ENCODE measurements at regions of chr10 and their contacts with region 1.

Region 1: DNA sequence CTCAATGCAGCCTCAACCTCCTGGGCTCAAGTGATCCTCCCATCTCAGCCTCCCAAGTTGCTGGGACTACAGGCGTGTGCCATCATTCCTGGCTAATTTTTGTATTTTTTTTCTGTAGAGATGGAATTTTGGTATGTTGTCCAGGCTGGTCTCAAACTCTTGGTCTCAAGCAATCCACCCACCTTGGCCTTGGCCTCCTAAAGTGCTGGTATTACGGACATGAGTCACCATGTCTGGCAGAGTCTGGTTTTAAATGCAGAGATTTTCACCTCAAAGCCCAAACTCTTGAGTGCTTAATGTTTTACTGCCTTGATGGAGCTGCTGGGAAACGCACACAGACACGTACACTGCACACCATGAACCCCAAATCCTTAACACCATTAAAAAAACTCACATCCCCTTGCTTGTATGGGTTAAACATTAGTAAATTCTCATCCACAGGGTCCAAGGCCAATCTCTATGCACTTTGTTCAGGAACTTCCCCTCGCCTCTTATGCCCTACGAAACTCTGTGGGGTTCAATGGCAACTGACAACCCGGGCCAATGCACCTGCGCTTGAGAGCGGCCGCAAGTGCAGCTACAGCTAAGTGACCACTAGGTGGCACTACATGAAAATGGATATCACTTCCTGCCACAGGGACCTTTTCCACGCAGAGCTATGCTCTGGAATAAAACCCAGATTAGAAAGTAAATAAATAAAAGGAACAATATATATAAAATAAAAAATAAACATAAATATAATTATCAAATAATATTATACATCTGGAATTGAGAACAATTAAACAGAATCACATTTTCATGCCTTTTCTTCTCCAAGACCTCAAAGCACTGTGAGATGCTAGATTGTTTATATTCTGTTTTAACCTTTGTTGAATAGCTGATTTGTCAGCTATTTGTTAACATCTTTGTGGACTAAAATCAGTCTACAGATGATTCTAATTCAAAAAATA is 66.9 kb upstream of the AFAP1L2 start:
- DNase-seq: peak; percentile 35 to 75 (median 64)
- ATAC-seq: peak; percentile 92
- H3K4me3 ChIP-seq: no peak overlapping the region
- H3K4me3 Mint-ChIP-seq: peak overlapping the region in 6 of 10 donors; percentile 23 to 64 (median 39)
- H3K27ac ChIP-seq: peak overlapping the region; percentile 47
- H3K27ac Mint-ChIP-seq: peak overlapping the region; percentile 11 to 96 (median 73)
- H3K4me1 ChIP-seq: peaks cover 0 to 10% of the 10 kb centered on the region in 2 donors
- H3K4me1 Mint-ChIP-seq: peaks cover 10 to 54% (median 43%) of the 10 kb centered on the region in 7 donors
- H3K27me3 ChIP-seq: no peaks in the 10 kb centered on the region
- H3K27me3 Mint-ChIP-seq: no peaks in the 10 kb centered on the region

Region 2: GRCh38 chr10:114437456-114438292 is 33.6 kb before region 1 on chr10:
- CTCF ChIA-PET with region 1: no interaction called
- POLR2A ChIA-PET with region 1: no interaction called
- intact Hi-C with region 1: no loop called
- DNase-seq: no peak
- ATAC-seq: no peak
- H3K4me3 ChIP-seq: no peak overlapping the region
- H3K4me3 Mint-ChIP-seq: no peak overlapping the region
- H3K27ac ChIP-seq: no peak overlapping the region
- H3K27ac Mint-ChIP-seq: peak overlapping the region in 8 of 9 donors; percentile 2 to 82 (median 30)
- H3K4me1 ChIP-seq: no peaks in the 10 kb centered on the region
- H3K4me1 Mint-ChIP-seq: peaks cover 0 to 2% (median 0%) of the 10 kb centered on the region in 7 donors
- H3K27me3 ChIP-seq: no peaks in the 10 kb centered on the region
- H3K27me3 Mint-ChIP-seq: no peaks in the 10 kb centered on the region

Region 3: GRCh38 chr10:114492351-114493037 is 21.3 kb after region 1 on chr10:
- CTCF ChIA-PET with region 1: interaction called, 11 read pairs
- POLR2A ChIA-PET with region 1: interaction called, 5 read pairs
- intact Hi-C with region 1: loop called in 1 of 2 experiments (anchors 1 kb)
- DNase-seq: peak in 7 of 9 donors; percentile 47 to 73 (median 62)
- ATAC-seq: peak; percentile 55
- H3K4me3 ChIP-seq: peak overlapping the region; percentile 19
- H3K4me3 Mint-ChIP-seq: peak overlapping the region; percentile 56 to 83 (median 74)
- H3K27ac ChIP-seq: peak overlapping the region; percentile 74
- H3K27ac Mint-ChIP-seq: peak overlapping the region; percentile 14 to 94 (median 71)
- H3K4me1 ChIP-seq: peaks cover 16 to 55% of the 10 kb centered on the region in 2 donors
- H3K4me1 Mint-ChIP-seq: peaks cover 42 to 94% (median 84%) of the 10 kb centered on the region in 7 donors
- H3K27me3 ChIP-seq: no peaks in the 10 kb centered on the region
- H3K27me3 Mint-ChIP-seq: no peaks in the 10 kb centered on the region

Region 4: DNA sequence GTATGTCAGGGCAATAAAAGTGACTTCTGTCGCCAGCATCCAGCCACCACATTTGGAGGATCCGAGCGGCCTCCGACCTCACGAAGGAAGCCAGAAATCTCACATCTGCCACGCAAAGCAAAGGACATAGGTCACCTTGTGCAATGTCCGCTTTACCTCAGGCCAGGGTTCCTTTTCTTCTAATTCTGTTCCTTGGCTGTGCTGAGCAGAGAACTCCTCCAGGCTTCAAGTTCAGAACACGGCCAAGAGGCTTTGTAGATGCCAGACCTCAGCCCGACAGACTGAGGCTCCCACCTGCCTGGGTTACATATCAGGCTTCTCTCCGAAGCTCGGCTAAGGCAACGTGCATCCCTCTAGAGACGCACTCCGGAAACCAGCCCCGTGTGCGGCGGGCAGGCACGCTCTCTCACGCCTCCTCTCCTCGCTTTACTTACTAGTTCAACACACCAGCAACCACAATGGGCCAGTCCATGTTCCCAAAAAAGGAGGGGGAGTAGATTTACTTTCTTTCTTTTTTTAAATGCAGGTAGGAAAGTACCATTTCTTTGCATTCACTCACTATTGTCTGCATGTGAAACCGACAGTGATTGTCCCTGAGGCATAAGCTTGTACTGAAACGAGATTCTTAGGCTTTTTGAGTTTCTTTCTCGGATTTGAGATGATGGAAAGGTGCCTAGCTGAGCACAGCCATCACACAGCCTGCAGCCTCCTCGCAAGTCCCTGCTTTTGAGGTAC is 55.4 kb after region 1 on chr10:
- CTCF ChIA-PET with region 1: interaction called, 6 read pairs
- POLR2A ChIA-PET with region 1: interaction called, 6 read pairs
- intact Hi-C with region 1: loop called (anchors 1 kb)
- DNase-seq: peak; percentile 64 to 97 (median 95)
- ATAC-seq: peak; percentile 94
- H3K4me3 ChIP-seq: peak overlapping the region; percentile 85
- H3K4me3 Mint-ChIP-seq: peak overlapping the region; percentile 88 to 100 (median 98)
- H3K27ac ChIP-seq: peak overlapping the region; percentile 94
- H3K27ac Mint-ChIP-seq: peak overlapping the region; percentile 92 to 100 (median 98)
- H3K4me1 ChIP-seq: peaks cover 35 to 45% of the 10 kb centered on the region in 2 donors
- H3K4me1 Mint-ChIP-seq: peaks cover 34 to 64% (median 53%) of the 10 kb centered on the region in 7 donors
- H3K27me3 ChIP-seq: no peaks in the 10 kb centered on the region
- H3K27me3 Mint-ChIP-seq: peaks cover 0 to 4% (median 0%) of the 10 kb centered on the region in 5 donors

Region 5: GRCh38 chr10:114631666-114632417 is 160.6 kb after region 1 on chr10:
- CTCF ChIA-PET with region 1: no interaction called
- POLR2A ChIA-PET with region 1: no interaction called
- intact Hi-C with region 1: loop called in 1 of 2 experiments (anchors 5 kb)
- DNase-seq: peak in 7 of 9 donors; percentile 4 to 51 (median 12)
- ATAC-seq: peak; percentile 72
- H3K4me3 ChIP-seq: peak overlapping the region; percentile 47
- H3K4me3 Mint-ChIP-seq: peak overlapping the region; percentile 72 to 93 (median 89)
- H3K27ac ChIP-seq: no peak overlapping the region
- H3K27ac Mint-ChIP-seq: peak overlapping the region in 2 of 9 donors; percentile 1 to 50
- H3K4me1 ChIP-seq: peaks cover 0 to 6% of the 10 kb centered on the region in 2 donors
- H3K4me1 Mint-ChIP-seq: peaks cover 5 to 22% (median 14%) of the 10 kb centered on the region in 7 donors
- H3K27me3 ChIP-seq: peaks cover 10 to 12% of the 10 kb centered on the region in 2 donors
- H3K27me3 Mint-ChIP-seq: peaks cover 53 to 60% (median 58%) of the 10 kb centered on the region in 5 donors

Region 6: DNA sequence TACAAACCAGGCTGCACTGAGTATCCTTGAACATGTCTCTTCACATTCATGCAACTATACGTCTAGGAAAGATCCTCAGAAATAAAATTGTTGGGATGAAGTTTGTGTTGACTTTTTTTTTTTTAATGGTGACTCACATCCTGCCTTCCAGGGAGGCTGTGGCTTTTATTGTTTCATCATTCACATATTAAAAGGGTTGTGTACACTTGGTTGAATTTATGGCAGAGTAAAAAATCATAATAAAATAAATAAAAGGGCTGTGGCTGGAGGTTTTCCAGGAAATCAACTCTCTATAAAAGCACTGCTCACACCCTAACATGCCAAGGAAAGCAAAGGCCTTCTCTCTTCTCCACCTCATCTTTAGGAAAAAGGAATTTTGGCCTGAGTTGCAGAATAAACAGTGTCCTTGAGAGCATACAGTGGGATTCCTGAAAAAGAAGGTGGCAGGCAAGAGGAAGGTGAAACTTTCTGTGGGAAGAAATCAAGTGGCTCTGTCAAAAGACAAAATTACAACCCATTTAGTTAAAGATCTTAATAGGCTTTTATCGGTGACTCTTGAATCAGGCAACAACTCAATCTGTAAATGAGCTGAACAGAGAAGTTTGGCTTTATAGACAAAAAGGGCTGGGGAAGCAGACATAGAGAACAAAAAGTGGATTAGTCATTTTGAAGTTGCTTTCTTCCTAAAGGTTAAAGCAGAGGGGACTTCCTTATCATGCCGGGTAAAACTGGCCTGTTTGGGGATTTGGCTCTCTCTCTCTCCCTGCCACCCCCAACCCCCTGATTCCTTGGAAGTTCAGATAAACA is 308.8 kb after region 1 on chr10:
- CTCF ChIA-PET with region 1: interaction called, 10 read pairs
- POLR2A ChIA-PET with region 1: no interaction called
- intact Hi-C with region 1: no loop called
- DNase-seq: no peak
- ATAC-seq: no peak
- H3K4me3 ChIP-seq: no peak overlapping the region
- H3K4me3 Mint-ChIP-seq: no peak overlapping the region
- H3K27ac ChIP-seq: no peak overlapping the region
- H3K27ac Mint-ChIP-seq: no peak overlapping the region
- H3K4me1 ChIP-seq: no peaks in the 10 kb centered on the region
- H3K4me1 Mint-ChIP-seq: peaks cover 0 to 12% (median 0%) of the 10 kb centered on the region in 7 donors
- H3K27me3 ChIP-seq: no peaks in the 10 kb centered on the region
- H3K27me3 Mint-ChIP-seq: peaks cover 7 to 29% (median 20%) of the 10 kb centered on the region in 5 donors

Region 7: DNA sequence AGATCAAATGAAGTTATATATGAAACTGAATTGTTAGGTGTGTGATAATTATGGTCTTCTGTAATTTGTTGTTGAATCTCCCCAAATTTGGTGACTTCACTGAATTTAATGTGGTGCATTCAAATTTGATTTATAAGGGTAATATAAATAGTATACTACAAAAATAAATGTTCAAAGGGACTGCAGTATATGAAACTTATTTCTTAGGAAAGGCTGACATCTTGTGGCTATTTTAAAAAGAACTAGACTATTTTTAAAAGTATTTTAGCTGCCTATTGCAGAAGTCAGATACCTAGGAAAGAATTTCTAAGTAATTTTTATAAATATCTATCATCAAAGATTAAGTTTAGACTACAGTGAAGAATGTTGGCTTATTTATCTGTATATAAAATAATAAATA is 658.5 kb after region 1 on chr10:
- CTCF ChIA-PET with region 1: no interaction called
- POLR2A ChIA-PET with region 1: no interaction called
- intact Hi-C with region 1: loop called in 1 of 2 experiments (anchors 10 kb)
- DNase-seq: peak in 4 of 9 donors; percentile 2 to 14 (median 6)
- ATAC-seq: no peak
- H3K4me3 ChIP-seq: no peak overlapping the region
- H3K4me3 Mint-ChIP-seq: no peak overlapping the region
- H3K27ac ChIP-seq: no peak overlapping the region
- H3K27ac Mint-ChIP-seq: no peak overlapping the region
- H3K4me1 ChIP-seq: no peaks in the 10 kb centered on the region
- H3K4me1 Mint-ChIP-seq: no peaks in the 10 kb centered on the region
- H3K27me3 ChIP-seq: no peaks in the 10 kb centered on the region
- H3K27me3 Mint-ChIP-seq: peaks cover 1 to 18% (median 12%) of the 10 kb centered on the region in 5 donors

Measured in naive thymus-derived CD4-positive, alpha-beta T cell (primary cell).